Heart right ventricle (tissue), 16 donors: ENCODE measurements at regions of chr20 and their contacts with region 1.

Region 1: DNA sequence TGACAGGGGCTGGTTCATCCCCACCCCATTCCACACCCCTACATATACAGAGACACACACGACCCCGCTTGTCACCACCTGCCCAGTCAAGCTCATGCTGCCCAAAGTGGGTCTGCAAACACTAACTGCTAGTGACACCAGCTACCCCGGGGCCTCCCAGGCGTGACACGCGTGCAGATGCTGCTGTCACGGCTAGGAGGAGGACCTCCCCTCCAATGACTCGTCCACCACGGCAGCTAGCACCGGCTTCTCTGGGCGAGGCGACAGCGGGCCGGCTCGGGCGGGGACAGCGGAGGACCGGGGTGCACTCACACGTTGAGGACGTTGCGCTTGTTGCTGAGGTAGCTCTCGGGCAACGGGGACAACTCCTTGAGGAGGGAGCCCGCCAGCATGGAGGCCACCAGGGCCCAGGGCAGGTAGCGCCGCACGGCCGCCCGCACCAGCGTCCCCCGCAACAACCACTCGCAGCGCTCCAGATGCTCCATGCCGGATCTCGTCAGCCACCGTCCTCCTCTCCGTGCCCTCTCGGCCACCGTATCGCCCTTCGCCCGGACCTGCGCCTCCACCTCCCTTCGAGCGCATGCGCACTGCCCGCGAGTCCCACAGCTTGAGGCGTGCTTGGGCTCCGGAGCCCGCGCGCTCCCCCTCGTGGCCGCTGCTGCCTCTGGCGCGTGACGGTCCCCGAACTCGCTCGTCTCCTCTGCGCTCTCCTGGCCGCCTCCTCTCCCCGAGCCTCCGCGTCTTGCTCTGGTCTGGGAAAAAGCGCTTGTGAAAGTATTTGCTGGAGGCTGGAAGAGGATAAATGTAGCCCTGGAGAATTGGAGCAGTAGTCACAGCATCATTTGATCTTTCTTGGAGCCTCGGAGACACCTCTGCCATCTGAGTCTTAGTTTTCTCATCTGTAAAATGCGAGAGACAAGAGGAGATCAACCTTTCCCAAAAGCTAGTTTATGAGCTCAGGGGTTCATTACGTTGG is at the start of gene FITM2:
- DNase-seq: peak; percentile 99
- ATAC-seq: peak; percentile 88 to 96 (median 92)
- H3K4me3 ChIP-seq: peak within 1 kb of the TSS; percentile 57 to 97 (median 79)
- H3K27ac ChIP-seq: peak within 1 kb of the TSS; percentile 79 to 92 (median 86)
- H3K4me1 ChIP-seq: peaks cover 0 to 44% (median 20%) of the 10 kb centered on the region in 9 donors
- H3K27me3 ChIP-seq: no peaks in the 10 kb centered on the region
- CTCF ChIP-seq: peak; percentile 92 to 99 (median 97)
- total RNA-seq, gene FITM2: 94.4 to 182 (median 140) TPM

Region 2: GRCh38 chr20:44056010-44056698 is 254.8 kb before region 1 on chr20:
- intact Hi-C with region 1: no loop called
- DNase-seq: no peak
- ATAC-seq: peak in 6 of 8 donors; percentile 38 to 75 (median 68)
- H3K4me3 ChIP-seq: no peak overlapping the region
- H3K27ac ChIP-seq: no peak overlapping the region
- H3K4me1 ChIP-seq: no peaks in the 10 kb centered on the region
- H3K27me3 ChIP-seq: no peaks in the 10 kb centered on the region
- CTCF ChIP-seq: peak in 8 of 9 donors; percentile 17 to 59 (median 50)

Region 3: DNA sequence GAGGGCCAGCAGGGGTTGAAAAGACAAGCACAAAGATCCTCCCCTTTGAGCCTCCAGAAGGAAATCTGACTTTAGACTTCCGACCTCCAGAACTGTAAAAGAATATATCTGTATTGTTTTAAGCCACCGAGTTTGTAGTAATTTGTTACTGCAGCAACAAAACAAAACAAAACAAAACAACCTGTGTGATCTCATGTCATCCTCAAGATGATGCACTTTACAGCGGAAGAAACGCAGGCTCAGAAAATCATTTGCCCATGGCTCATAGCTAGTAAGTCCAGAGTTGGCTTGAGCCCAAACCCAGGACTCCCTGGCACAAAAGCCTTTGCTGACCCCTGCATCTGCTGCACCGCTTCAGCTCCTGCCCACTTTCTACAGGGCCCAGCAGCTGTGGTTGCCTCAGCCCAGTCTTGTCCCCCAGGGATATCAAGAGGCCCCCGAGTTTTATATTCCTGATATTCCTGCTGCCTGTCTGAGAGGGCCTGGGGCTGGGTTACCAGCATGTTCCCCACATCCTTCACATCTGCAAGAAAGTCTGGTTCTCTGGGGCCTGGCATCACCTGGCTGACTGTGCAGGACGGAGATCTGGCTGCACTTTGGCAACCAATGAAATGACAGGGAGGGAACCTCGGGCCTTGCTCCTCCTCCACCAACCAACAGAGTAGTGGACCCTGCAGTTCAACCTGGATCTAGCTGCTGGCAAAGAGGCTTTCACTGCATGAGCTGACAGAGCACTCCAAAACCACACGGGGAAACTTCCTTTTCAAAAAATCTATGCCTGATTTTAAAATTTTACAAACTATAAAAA is 180.8 kb before region 1 on chr20:
- intact Hi-C with region 1: loop called in 1 of 10 experiments (anchors 10 kb)
- DNase-seq: no peak
- ATAC-seq: peak in 4 of 8 donors; percentile 25 to 39 (median 30)
- H3K4me3 ChIP-seq: no peak overlapping the region
- H3K27ac ChIP-seq: peak overlapping the region in 3 of 10 donors; percentile 13 to 28 (median 25)
- H3K4me1 ChIP-seq: peaks cover 0 to 30% (median 9%) of the 10 kb centered on the region in 9 donors
- H3K27me3 ChIP-seq: no peaks in the 10 kb centered on the region
- CTCF ChIP-seq: no peak

Region 4: GRCh38 chr20:44176833-44177534 is 134.0 kb before region 1 on chr20:
- intact Hi-C with region 1: no loop called
- DNase-seq: no peak
- ATAC-seq: peak in 5 of 8 donors; percentile 5 to 73 (median 16)
- H3K4me3 ChIP-seq: no peak overlapping the region
- H3K27ac ChIP-seq: peak overlapping the region in 9 of 10 donors; percentile 27 to 97 (median 88)
- H3K4me1 ChIP-seq: peaks cover 3 to 90% (median 32%) of the 10 kb centered on the region in 9 donors
- H3K27me3 ChIP-seq: peaks cover 0 to 23% (median 0%) of the 10 kb centered on the region in 7 donors
- CTCF ChIP-seq: no peak

Region 5: DNA sequence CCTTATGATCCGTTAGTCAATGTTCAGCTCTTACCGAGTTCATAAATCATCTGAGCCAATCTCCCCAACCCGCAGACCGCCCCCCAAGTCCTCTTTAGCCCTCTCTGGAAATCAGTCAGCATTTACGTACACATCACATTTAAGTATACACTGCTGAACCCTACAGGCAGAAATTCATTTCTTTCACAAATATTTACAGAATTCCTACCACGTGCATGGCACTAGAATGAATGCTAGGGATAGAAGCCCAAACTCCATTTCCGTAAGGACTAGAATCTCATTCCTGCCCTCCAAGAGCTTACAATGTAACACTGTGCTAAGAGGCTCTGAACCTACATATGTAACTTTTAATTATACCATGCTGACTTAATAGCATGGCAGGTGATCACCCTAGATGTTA is 102.2 kb before region 1 on chr20:
- intact Hi-C with region 1: no loop called
- DNase-seq: no peak
- ATAC-seq: no peak
- H3K4me3 ChIP-seq: peak overlapping the region in 9 of 10 donors; percentile 73 to 99 (median 94)
- H3K27ac ChIP-seq: peak overlapping the region in 7 of 10 donors; percentile 14 to 99 (median 97)
- H3K4me1 ChIP-seq: peaks cover 0 to 75% (median 62%) of the 10 kb centered on the region in 9 donors
- H3K27me3 ChIP-seq: no peaks in the 10 kb centered on the region
- CTCF ChIP-seq: no peak

Region 6: DNA sequence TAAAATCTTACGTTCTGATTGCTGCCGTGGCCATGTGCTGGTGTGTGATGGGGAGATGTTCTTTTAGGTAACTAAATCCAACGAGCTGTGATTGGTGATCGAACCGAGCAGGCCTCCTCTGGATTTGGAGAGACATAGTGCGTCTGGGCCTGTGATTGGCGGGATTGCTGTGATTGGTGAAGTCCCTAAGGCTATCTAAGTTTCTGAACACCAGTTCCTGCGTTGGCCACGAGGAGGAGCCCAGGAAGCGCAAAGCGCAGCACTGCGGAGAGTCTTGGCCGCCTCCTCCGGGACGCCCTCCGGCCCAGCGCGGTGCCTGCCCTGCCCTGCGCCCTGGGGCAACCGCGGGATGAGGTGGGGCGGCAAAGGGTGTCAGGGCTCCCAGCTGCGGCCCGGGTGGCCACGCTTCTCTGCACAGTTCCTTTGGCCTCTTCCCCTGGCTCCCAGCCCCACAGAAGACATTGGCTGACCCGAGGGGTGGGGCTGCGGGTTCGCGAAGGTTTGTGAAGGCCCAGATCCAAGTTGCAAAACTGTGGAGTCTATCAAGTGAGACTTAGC is 77.6 kb after region 1 on chr20:
- intact Hi-C with region 1: loop called in 2 of 10 experiments (anchors 5 to 10 kb)
- DNase-seq: peak; percentile 33 to 68
- ATAC-seq: peak in 7 of 8 donors; percentile 50 to 80 (median 70)
- H3K4me3 ChIP-seq: no peak overlapping the region
- H3K27ac ChIP-seq: no peak overlapping the region
- H3K4me1 ChIP-seq: peaks cover 0 to 6% (median 0%) of the 10 kb centered on the region in 9 donors
- H3K27me3 ChIP-seq: peaks cover 0 to 27% (median 18%) of the 10 kb centered on the region in 7 donors
- CTCF ChIP-seq: peak; percentile 35 to 80 (median 64)

Region 7: DNA sequence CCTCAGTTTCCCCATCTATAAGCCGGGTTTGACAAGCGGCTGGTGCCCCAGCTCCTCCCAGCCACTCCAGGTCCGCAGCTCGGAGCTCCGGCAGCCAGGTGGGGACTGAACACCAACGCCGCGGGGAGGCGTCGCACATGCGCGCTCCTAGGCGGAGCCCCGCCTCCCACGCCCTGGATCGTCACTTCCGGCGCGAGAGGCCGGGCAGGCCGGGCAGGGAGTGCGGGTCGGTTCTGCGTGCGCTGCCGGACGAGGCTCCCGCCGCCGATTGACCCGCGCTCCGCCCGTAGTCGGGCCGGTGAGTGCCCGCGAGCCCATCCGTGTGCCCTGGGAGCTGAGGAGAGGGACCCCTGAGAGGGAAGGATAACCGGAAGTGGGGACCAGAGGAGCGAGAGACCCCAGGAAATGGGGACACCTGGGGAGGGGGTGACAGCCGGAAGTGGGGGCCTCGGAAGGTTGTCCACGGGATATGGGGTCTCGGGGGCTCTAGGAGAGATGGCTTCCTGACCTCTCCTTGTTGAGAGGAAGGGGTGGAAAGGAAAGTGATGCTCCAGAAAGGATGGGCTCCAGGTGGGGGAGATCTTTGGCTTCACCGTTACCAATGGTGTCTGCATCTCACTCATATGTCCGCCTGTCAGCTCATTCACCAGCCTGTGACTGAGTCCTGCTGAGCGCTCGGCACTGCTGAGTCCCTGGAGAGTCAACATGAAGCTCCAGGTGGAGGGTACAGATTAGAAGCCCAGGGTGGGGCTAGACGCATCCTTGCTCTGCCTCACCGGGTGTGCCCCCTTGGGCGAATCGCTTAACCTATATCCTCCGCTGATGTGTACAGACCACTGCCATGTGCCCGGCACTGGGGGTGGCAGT is 165.0 kb after region 1 on chr20 and contains the start of gene TTPAL:
- intact Hi-C with region 1: loop called in 1 of 10 experiments (anchors 10 kb)
- DNase-seq: peak; percentile 85 to 89
- ATAC-seq: peak; percentile 97 to 99 (median 98)
- H3K4me3 ChIP-seq: peak within 1 kb of the TSS; percentile 43 to 82 (median 70)
- H3K27ac ChIP-seq: peak within 1 kb of the TSS; percentile 75 to 97 (median 89)
- H3K4me1 ChIP-seq: peaks cover 3 to 21% (median 12%) of the 10 kb centered on the region in 9 donors
- H3K27me3 ChIP-seq: no peaks in the 10 kb centered on the region
- CTCF ChIP-seq: peak in 7 of 9 donors; percentile 28 to 68 (median 42)
- total RNA-seq, gene TTPAL: 2.6 to 7.3 (median 4.7) TPM

Region 8: DNA sequence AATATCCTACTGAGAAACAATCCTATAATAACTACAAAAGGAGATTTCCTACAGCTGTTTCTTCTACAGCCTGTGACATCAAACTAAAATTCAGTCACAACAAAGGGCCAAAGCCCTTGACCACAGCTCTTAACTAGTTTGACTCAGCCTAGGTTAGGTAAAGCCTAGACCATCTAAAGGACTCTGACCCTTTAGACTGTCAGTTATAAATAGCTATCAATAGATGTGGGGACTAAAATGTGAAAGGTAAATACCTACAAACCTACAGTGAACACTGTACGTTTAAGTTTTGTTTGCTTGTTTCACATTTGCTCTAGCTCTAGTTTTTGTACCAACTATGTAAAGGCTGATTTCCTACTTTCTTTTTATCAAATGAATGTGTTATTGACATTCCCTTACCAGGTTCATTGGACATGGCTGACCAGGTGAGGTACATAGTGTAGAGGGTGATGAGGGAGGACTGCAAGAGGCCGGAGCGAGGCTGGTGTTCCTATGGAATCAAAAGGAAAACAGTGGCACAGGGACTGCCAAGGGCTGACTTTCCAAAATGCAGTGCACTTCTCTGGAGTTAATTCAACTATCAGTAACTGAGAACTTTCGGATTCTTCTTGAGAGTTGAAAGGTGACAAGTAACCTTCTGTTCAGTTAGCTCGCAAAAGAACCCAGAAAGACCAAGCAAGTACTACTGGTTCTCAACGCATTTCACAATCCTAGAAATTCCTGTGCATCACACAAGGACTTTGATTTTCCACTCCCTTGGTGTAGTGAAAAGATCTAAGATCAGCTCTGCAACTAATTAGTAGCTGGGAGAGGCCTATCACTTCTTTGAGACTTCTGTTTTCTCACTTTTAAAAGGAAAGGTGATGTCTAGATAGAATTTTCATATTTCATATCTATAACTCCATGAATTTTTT is 193.7 kb after region 1 on chr20:
- intact Hi-C with region 1: no loop called
- DNase-seq: no peak
- ATAC-seq: no peak
- H3K4me3 ChIP-seq: no peak overlapping the region
- H3K27ac ChIP-seq: no peak overlapping the region
- H3K4me1 ChIP-seq: peaks cover 2 to 21% (median 13%) of the 10 kb centered on the region in 9 donors
- H3K27me3 ChIP-seq: no peaks in the 10 kb centered on the region
- CTCF ChIP-seq: no peak